Activated CD4-positive, alpha-beta memory T cell treated with anti-CD3 and anti-CD28 coated beads for 36 hours (primary cell): ENCODE measurements at regions of chr22 and their contacts with region 1.

Region 1: GRCh38 chr22:37139762-37140161 is 10.0 kb downstream of the IL2RB start:
- DNase-seq: peak; percentile 40
- H3K4me3 Mint-ChIP-seq: peak overlapping the region; percentile 25
- H3K27ac Mint-ChIP-seq: peak overlapping the region; percentile 98
- H3K4me1 Mint-ChIP-seq: peaks cover 78% of the 10 kb centered on the region
- H3K27me3 Mint-ChIP-seq: no peaks in the 10 kb centered on the region

Region 2: DNA sequence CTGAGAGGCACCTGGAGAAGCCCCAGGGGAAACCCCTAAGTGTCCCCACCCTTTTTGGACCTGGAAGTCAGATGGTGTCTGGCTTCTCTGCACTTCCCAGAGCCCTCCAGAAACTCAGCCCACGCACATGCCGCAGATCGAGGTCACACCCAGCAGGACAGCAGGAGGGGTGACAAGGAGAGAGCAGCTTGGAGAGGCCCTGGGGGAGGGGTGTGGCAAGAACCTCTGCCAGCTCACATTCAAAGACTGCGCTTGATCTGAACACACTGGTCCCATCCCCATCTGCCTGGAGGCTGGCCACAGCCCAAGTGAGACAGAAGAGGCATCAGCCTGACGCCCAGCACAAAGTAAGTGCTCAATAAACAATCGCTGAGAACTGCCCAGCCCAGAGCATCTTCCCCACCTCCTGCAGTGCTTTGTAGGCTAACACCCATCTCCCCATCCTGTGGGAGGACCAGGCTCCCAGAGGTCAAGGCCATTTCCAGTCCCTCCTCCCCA is 51.6 kb before region 1 on chr22:
- CTCF ChIA-PET with region 1: no interaction called
- POLR2A ChIA-PET with region 1: interaction called, 6 read pairs
- intact Hi-C with region 1: loop called (anchors 2 kb)
- DNase-seq: peak; percentile 85
- H3K4me3 Mint-ChIP-seq: peak overlapping the region; percentile 74
- H3K27ac Mint-ChIP-seq: peak overlapping the region; percentile 83
- H3K4me1 Mint-ChIP-seq: peaks cover 37% of the 10 kb centered on the region
- H3K27me3 Mint-ChIP-seq: peaks cover 2% of the 10 kb centered on the region

Region 3: GRCh38 chr22:37100589-37101127 is 39.1 kb before region 1 on chr22:
- CTCF ChIA-PET with region 1: no interaction called
- POLR2A ChIA-PET with region 1: no interaction called
- intact Hi-C with region 1: loop called (anchors 1 kb)
- DNase-seq: peak; percentile 61
- H3K4me3 Mint-ChIP-seq: peak overlapping the region; percentile 31
- H3K27ac Mint-ChIP-seq: peak overlapping the region; percentile 40
- H3K4me1 Mint-ChIP-seq: peaks cover 25% of the 10 kb centered on the region
- H3K27me3 Mint-ChIP-seq: peaks cover 2% of the 10 kb centered on the region

Region 4: GRCh38 chr22:37267135-37267587 is 127.4 kb after region 1 on chr22:
- CTCF ChIA-PET with region 1: no interaction called
- POLR2A ChIA-PET with region 1: no interaction called
- intact Hi-C with region 1: no loop called
- DNase-seq: peak; percentile 81
- H3K4me3 Mint-ChIP-seq: peak overlapping the region; percentile 86
- H3K27ac Mint-ChIP-seq: peak overlapping the region; percentile 92
- H3K4me1 Mint-ChIP-seq: peaks cover 34% of the 10 kb centered on the region
- H3K27me3 Mint-ChIP-seq: no peaks in the 10 kb centered on the region